Heart left ventricle (tissue), 16 donors: ENCODE measurements at regions of chr2 and their contacts with region 1.

Region 1: DNA sequence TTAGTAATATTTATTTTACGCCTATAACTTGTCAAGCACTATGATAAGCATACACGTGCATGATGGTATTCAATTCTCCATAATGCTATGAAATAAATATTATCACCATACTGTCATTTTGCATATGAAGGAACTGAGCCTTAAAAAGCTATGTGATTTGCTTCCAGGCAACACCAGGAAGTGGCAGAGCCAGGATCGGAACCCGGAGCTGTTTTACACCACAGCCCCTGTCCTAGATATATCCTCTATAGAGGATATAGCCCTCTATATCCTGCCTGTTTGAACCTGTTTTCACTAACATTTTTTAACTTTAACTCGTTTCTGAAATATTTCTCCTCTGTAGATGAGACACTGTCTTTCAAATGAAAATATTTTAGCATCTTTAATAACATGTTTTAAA is 690.0 kb downstream of the SATB2 start:
- DNase-seq: no peak
- ATAC-seq: no peak
- H3K4me3 ChIP-seq: no peak overlapping the region
- H3K27ac ChIP-seq: no peak overlapping the region
- H3K4me1 ChIP-seq: no peaks in the 10 kb centered on the region
- H3K27me3 ChIP-seq: no peaks in the 10 kb centered on the region
- CTCF ChIP-seq: no peak
- POLR2A ChIP-seq: no peak

Region 2: DNA sequence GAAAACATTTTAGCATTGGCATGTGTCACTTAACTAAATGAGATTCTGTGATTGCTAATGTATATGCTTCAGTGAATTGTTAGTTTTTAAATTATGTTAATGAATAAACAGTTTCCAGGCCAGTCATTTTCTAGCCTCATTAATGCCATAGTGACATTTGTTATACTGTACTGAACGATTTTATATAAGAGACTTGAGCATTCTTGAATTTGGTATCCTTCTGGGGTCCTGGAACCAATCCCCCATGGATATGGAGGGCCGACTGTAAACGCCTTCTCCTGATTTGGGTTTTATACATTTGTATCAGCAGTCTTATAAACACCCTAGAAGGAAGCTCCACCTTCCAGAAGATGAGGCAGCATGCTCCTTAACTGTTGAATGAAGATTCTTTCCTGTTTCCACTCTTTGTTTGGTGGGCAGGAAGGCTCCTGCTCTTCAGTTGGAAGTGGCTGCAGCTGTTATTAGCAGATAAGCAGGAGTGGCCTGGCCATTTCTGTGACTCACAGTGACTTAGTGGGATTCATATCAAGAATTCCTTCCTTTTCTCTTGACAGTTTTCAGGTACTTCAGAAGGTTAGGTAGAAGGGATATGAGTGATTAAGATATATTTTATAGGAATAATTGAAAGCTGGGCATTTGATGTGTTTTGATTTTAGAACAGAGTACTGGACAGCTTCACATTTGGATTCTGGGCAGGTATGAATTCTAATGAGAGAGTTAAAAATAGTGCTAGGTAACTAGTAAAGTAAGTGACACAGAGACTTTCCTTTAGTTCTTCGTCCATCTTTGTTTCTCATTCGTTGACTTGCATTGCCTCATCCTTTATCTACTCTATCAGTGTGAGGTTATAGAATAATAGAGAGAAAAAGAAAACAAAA is 838.4 kb before region 1 on chr2:
- intact Hi-C with region 1: no loop called
- DNase-seq: peak in 2 of 5 donors; percentile 32 to 53
- ATAC-seq: peak; percentile 16 to 79 (median 74)
- H3K4me3 ChIP-seq: no peak overlapping the region
- H3K27ac ChIP-seq: peak overlapping the region in 4 of 12 donors; percentile 24 to 37 (median 27)
- H3K4me1 ChIP-seq: peaks cover 4 to 59% (median 25%) of the 10 kb centered on the region in 12 donors
- H3K27me3 ChIP-seq: no peaks in the 10 kb centered on the region
- CTCF ChIP-seq: no peak
- POLR2A ChIP-seq: no peak

Region 3: DNA sequence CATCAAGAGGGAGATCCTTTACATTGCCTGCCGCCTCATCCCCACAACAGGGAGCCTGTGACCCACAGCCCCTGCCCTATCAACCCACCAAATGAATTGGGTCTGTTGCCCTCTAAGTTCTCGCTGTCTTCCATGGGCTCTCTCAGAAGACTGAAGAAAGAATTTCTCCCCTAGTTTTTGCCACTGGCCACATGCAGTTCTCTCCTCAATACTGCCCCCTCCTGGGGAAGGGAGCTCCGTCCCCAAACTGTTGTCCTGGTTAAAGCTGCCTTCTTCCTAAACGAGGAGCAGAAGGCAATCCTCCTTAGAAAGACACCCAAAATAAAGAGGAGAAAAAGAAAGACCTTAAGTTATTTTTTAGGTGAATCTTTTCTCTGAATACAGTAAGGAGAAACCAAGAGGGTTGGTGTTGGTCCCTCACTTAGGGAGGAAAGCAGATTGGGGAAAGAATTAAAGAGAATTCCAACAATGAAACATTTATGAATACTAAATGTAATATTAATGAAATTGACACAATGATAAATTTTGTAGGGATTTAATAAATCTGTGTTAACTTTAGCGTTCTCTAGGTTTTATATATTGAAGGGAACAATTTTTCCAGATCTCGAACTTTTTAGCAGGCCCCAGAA is 721.2 kb after region 1 on chr2:
- intact Hi-C with region 1: loop called in 1 of 10 experiments (anchors 5 kb)
- DNase-seq: no peak
- ATAC-seq: no peak
- H3K4me3 ChIP-seq: no peak overlapping the region
- H3K27ac ChIP-seq: no peak overlapping the region
- H3K4me1 ChIP-seq: no peaks in the 10 kb centered on the region
- H3K27me3 ChIP-seq: peaks cover 0 to 37% (median 5%) of the 10 kb centered on the region in 9 donors
- CTCF ChIP-seq: peak; percentile 38 to 72 (median 54)
- POLR2A ChIP-seq: no peak